ENCODE measurements at regions of chrX and their contacts with region 1.

Region 1: DNA sequence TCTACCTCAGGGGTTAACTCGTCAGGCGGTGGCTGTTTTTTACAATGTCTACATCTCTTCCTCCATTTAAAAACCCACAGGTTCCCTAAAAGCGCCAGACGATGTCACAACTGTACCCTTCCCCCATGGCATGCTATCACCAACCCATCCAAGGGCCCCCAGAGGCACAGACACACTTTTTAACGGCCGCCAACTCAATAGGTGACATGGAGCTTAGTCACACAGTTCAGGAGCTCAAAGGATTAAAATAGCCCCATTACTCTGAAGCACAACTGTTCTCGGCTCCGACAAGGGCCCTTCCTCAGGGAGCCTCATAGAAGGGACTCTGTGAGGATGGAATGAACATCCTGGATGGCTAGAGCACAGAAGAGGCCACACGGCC is 12.4 kb downstream of the SH3KBP1 start:
- DNase-seq: no peak
- ATAC-seq: peak; percentile 36
- H3K4me3 ChIP-seq: peak overlapping the region; percentile 46; the same call in 1 of the 2 replicates
- H3K27ac ChIP-seq: peak overlapping the region; percentile 68
- H3K4me1 ChIP-seq: peaks cover 24% of the 10 kb centered on the region
- H3K27me3 ChIP-seq: no peaks in the 10 kb centered on the region
- CTCF ChIP-seq: no peak
- EP300 ChIP-seq: no peak
- POLR2A ChIP-seq: no peak
- RAD21 ChIP-seq: no peak

Region 2: GRCh38 chrX:19479458-19479857 is 395.6 kb before region 1 on chrX:
- CTCF ChIA-PET with region 1: no interaction called
- POLR2A ChIA-PET with region 1: no interaction called
- RAD21 ChIA-PET with region 1: no interaction called
- SMC1A ChIA-PET with region 1: no interaction called
- in situ Hi-C with region 1: no loop called
- intact Hi-C with region 1: no loop called
- DNase-seq: no peak
- ATAC-seq: no peak
- H3K4me3 ChIP-seq: no peak overlapping the region
- H3K27ac ChIP-seq: no peak overlapping the region
- H3K4me1 ChIP-seq: no peaks in the 10 kb centered on the region
- H3K27me3 ChIP-seq: no peaks in the 10 kb centered on the region
- CTCF ChIP-seq: no peak
- EP300 ChIP-seq: no peak
- POLR2A ChIP-seq: no peak
- RAD21 ChIP-seq: no peak

Region 3: GRCh38 chrX:19846995-19847790 is 27.8 kb before region 1 on chrX:
- CTCF ChIA-PET with region 1: interaction called, 4 read pairs
- POLR2A ChIA-PET with region 1: interaction called, 6 read pairs
- RAD21 ChIA-PET with region 1: interaction called, 10 read pairs
- SMC1A ChIA-PET with region 1: interaction called, 28 read pairs
- in situ Hi-C with region 1: no loop called
- intact Hi-C with region 1: loop called (anchors 5 kb)
- DNase-seq: no peak
- ATAC-seq: peak; percentile 55
- H3K4me3 ChIP-seq: 0 out of 2 replicates have a peak overlapping the region, but pooled peaks have one; percentile 8
- H3K27ac ChIP-seq: peak overlapping the region; percentile 79
- H3K4me1 ChIP-seq: peaks cover 38% of the 10 kb centered on the region
- H3K27me3 ChIP-seq: no peaks in the 10 kb centered on the region
- CTCF ChIP-seq: no peak
- EP300 ChIP-seq: no peak
- POLR2A ChIP-seq: no peak
- RAD21 ChIP-seq: no peak

Region 4: GRCh38 chrX:19855700-19856381 is 19.2 kb before region 1 on chrX:
- CTCF ChIA-PET with region 1: interaction called, 7 read pairs
- POLR2A ChIA-PET with region 1: interaction called, 6 read pairs
- RAD21 ChIA-PET with region 1: interaction called, 13 read pairs
- SMC1A ChIA-PET with region 1: interaction called, 28 read pairs
- in situ Hi-C with region 1: no loop called
- intact Hi-C with region 1: no loop called
- DNase-seq: no peak
- ATAC-seq: peak; percentile 36
- H3K4me3 ChIP-seq: no peak overlapping the region
- H3K27ac ChIP-seq: peak overlapping the region; percentile 88
- H3K4me1 ChIP-seq: peaks cover 21% of the 10 kb centered on the region
- H3K27me3 ChIP-seq: no peaks in the 10 kb centered on the region
- CTCF ChIP-seq: no peak
- EP300 ChIP-seq: no peak
- POLR2A ChIP-seq: no peak
- RAD21 ChIP-seq: no peak